ENCODE measurements at regions of chr17 and their contacts with region 1.

Region 1: GRCh38 chr17:66727639-66728570 is 107.0 kb upstream of the CACNG5 start:
- DNase-seq: peak; percentile 87
- H3K4me3 ChIP-seq: no peak overlapping the region; a peak in 1 of 4 replicates
- H3K27ac ChIP-seq: peak overlapping the region in 1 of 2 experiments; percentile 36; a peak in 2 of 4 replicates
- H3K4me1 ChIP-seq: peaks cover 9 to 25% of the 10 kb centered on the region in 2 experiments; a peak in 1 of 4 replicates
- H3K27me3 ChIP-seq: no peaks in the 10 kb centered on the region
- CTCF ChIP-seq: peak; percentile 70
- EP300 ChIP-seq: no peak
- RAD21 ChIP-seq: peak; percentile 93

Region 2: DNA sequence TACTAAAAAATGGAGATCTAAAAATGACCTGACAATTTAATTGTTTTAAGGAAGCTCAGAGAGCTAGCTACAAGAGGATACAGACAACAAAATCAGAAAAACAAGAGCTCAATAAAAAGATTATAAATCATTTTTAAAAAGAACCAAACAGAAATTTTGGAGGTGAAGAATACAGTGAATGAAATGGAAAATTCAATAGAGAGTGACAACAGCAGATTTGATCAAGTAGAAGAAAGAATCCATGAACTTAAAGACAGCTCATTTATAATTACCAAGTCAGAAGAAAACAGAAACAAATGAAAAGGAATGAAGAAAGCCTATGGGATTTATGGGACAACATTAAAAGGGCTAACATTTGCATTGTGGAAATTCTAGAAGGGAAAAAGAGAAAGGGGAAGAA is 29.6 kb before region 1 on chr17:
- CTCF ChIA-PET with region 1: interaction called, 10 read pairs
- POLR2A ChIA-PET with region 1: no interaction called
- DNase-seq: no peak
- H3K4me3 ChIP-seq: no peak overlapping the region
- H3K27ac ChIP-seq: no peak overlapping the region
- H3K4me1 ChIP-seq: peaks cover 0 to 3% of the 10 kb centered on the region in 2 experiments; a peak in 1 of 4 replicates
- H3K27me3 ChIP-seq: no peaks in the 10 kb centered on the region
- CTCF ChIP-seq: no peak
- EP300 ChIP-seq: no peak
- RAD21 ChIP-seq: no peak

Region 3: GRCh38 chr17:66747578-66748275 is 19.8 kb after region 1 on chr17:
- CTCF ChIA-PET with region 1: interaction called, 22 read pairs
- POLR2A ChIA-PET with region 1: no interaction called
- DNase-seq: no peak
- H3K4me3 ChIP-seq: no peak overlapping the region
- H3K27ac ChIP-seq: no peak overlapping the region; a peak in 1 of 4 replicates
- H3K4me1 ChIP-seq: peaks cover 0 to 5% of the 10 kb centered on the region in 2 experiments; a peak in 1 of 4 replicates
- H3K27me3 ChIP-seq: no peaks in the 10 kb centered on the region
- CTCF ChIP-seq: no peak
- EP300 ChIP-seq: no peak
- RAD21 ChIP-seq: no peak

Region 4: GRCh38 chr17:66835476-66835875 is 107.6 kb after region 1 on chr17:
- CTCF ChIA-PET with region 1: interaction called, 20 read pairs
- POLR2A ChIA-PET with region 1: no interaction called
- DNase-seq: peak; percentile 54
- H3K4me3 ChIP-seq: peak overlapping the region in 1 of 2 experiments; percentile 44; a peak in 2 of 4 replicates
- H3K27ac ChIP-seq: no peak overlapping the region
- H3K4me1 ChIP-seq: peaks cover 4 to 22% of the 10 kb centered on the region in 2 experiments; a peak in 2 of 4 replicates
- H3K27me3 ChIP-seq: peaks cover 55% of the 10 kb centered on the region
- CTCF ChIP-seq: no peak
- EP300 ChIP-seq: no peak
- RAD21 ChIP-seq: no peak

Region 5: GRCh38 chr17:66885395-66885794 is 157.5 kb after region 1 on chr17:
- CTCF ChIA-PET with region 1: interaction called, 15 read pairs
- POLR2A ChIA-PET with region 1: no interaction called
- DNase-seq: no peak
- H3K4me3 ChIP-seq: no peak overlapping the region
- H3K27ac ChIP-seq: no peak overlapping the region
- H3K4me1 ChIP-seq: peaks cover 0 to 11% of the 10 kb centered on the region in 2 experiments; a peak in 1 of 4 replicates
- H3K27me3 ChIP-seq: 0 out of 2 replicates have a peak, but pooled peaks cover 7% of the 10 kb centered on the region
- CTCF ChIP-seq: no peak
- EP300 ChIP-seq: no peak
- RAD21 ChIP-seq: no peak

Region 6: DNA sequence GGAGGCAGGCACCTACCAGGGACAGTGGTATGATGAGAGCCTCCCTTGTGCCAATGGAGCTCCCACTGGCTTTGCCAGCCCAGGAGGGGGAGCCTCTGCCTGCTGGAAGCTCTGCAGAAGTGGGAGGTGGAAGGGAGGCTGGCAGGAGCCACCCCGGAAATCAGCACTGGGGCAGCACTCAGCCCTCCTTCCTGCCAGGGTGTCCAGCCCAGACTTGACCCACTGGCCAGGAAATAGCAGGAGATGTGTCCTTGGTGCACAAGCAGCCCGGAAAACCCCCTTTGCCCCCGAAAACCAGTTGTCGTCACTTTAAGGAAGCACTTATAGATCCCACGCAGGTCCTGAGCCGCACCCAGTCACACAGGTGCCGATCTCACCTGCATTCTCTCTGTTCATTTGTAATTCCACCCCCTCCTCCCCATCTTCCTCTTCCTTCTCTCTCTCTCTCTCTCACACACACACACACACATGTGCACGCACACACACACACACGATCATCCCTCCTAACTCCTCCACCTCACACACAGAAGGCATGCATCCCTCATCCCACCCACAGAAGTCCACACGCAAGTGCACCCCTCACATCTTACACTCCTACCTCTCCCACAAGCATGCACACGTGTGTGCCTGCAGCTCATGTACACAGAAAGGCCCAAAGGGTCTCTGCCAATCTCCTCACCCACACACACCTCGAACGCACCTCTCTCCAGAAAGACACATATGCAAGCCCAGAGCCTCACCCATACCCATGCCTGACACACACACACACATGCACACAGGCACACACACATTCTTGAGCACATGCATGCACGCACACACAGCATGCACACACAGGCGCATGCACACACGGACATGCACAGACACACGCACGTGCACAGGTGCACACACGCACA is 187.5 kb after region 1 on chr17:
- CTCF ChIA-PET with region 1: interaction called, 64 read pairs
- POLR2A ChIA-PET with region 1: no interaction called
- DNase-seq: peak; percentile 76
- H3K4me3 ChIP-seq: no peak overlapping the region
- H3K27ac ChIP-seq: no peak overlapping the region
- H3K4me1 ChIP-seq: peaks cover 0 to 6% of the 10 kb centered on the region in 2 experiments; a peak in 1 of 4 replicates
- H3K27me3 ChIP-seq: no peaks in the 10 kb centered on the region; the same call in 1 of the 2 replicates
- CTCF ChIP-seq: peak; percentile 58
- EP300 ChIP-seq: no peak
- RAD21 ChIP-seq: peak; percentile 89